ENCODE measurements at regions of chr1 and their contacts with region 1.

Region 1: GRCh38 chr1:234610348-234611152 is 572 bp upstream of the IRF2BP2 start:
- DNase-seq: peak; percentile 82
- ATAC-seq: peak; percentile 77
- H3K4me3 ChIP-seq: peak overlapping the region; percentile 54 to 64
- H3K27ac ChIP-seq: peak overlapping the region; percentile 89
- H3K4me1 ChIP-seq: peaks cover 47 to 71% of the 10 kb centered on the region in 2 experiments
- H3K27me3 ChIP-seq: no peaks in the 10 kb centered on the region
- CTCF ChIP-seq: 0 out of 6 replicates have a peak, but pooled peaks of 1 of the 3 experiments have one; percentile 11
- POLR2A ChIP-seq: no peak
- RAD21 ChIP-seq: no peak

Region 2: GRCh38 chr1:234499119-234499942 is 111.2 kb before region 1 on chr1:
- CTCF ChIA-PET with region 1: interaction called, 6 read pairs
- POLR2A ChIA-PET with region 1: interaction called, 6 read pairs
- RAD21 ChIA-PET with region 1: no interaction called
- intact Hi-C with region 1: loop called (anchors 1 kb)
- DNase-seq: peak; percentile 62
- ATAC-seq: peak; percentile 92
- H3K4me3 ChIP-seq: no peak overlapping the region
- H3K27ac ChIP-seq: no peak overlapping the region
- H3K4me1 ChIP-seq: peaks cover 13 to 43% of the 10 kb centered on the region in 2 experiments
- H3K27me3 ChIP-seq: no peaks in the 10 kb centered on the region
- CTCF ChIP-seq: peak; percentile 84 to 92 (median 87)
- POLR2A ChIP-seq: no peak
- RAD21 ChIP-seq: peak; percentile 100

Region 3: DNA sequence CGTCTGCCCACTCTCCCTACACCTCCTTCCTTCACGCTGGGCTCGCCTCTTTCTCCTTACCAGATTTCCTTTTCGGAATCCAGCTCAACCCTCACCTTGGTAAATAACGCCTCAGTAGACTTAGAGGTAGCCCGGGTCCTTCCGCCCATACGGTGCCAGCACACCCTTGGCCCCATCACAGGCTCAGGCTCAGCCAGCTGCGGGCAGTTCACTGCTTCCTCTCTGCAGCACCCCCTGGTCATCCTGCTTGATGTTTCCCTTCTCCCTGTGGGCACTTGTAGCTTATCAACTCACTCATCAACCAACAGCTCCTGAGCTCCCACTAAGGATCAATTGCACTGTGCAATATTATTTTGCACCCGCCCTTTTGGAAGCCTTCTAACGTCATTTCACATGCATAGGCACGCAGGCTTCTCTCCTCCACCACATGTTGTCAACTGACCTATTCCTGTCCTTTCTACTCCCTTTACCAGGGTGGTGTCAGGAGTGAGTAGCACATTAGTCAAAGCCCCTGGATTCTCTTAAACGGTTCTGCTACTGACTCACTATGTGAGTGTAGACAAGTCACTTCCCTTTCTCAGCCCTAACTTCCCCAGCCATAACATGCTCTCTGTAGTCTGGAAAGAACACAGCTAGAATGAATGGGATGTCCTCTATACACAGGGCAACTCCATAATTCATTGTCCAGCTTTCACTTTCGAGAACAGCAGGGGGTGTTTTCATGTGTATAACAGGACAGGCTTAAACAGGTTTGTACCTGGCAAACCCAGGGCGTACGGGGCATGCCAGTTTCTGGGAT is 46.5 kb after region 1 on chr1:
- CTCF ChIA-PET with region 1: no interaction called
- POLR2A ChIA-PET with region 1: interaction called, 12 read pairs
- RAD21 ChIA-PET with region 1: no interaction called
- intact Hi-C with region 1: no loop called
- DNase-seq: peak; percentile 86
- ATAC-seq: peak; percentile 68
- H3K4me3 ChIP-seq: peak overlapping the region in 1 of 2 experiments; percentile 7; a peak in 1 of 4 replicates
- H3K27ac ChIP-seq: no peak overlapping the region
- H3K4me1 ChIP-seq: peaks cover 27 to 64% of the 10 kb centered on the region in 2 experiments; a peak in 3 of 4 replicates
- H3K27me3 ChIP-seq: no peaks in the 10 kb centered on the region
- CTCF ChIP-seq: no peak
- POLR2A ChIP-seq: no peak
- RAD21 ChIP-seq: no peak; the same call in 1 of the 2 replicates

Region 4: GRCh38 chr1:234772345-234773147 is 162.0 kb after region 1 on chr1:
- CTCF ChIA-PET with region 1: no interaction called
- POLR2A ChIA-PET with region 1: no interaction called
- RAD21 ChIA-PET with region 1: no interaction called
- intact Hi-C with region 1: loop called (anchors 5 kb)
- DNase-seq: peak; percentile 97
- ATAC-seq: peak; percentile 96
- H3K4me3 ChIP-seq: peak overlapping the region in 1 of 2 experiments; percentile 16; a peak in 1 of 4 replicates
- H3K27ac ChIP-seq: peak overlapping the region; percentile 30; the same call in 1 of the 2 replicates
- H3K4me1 ChIP-seq: peaks cover 14 to 17% of the 10 kb centered on the region in 2 experiments
- H3K27me3 ChIP-seq: peaks cover 44% of the 10 kb centered on the region; the same call in 1 of the 2 replicates
- CTCF ChIP-seq: no peak
- POLR2A ChIP-seq: no peak
- RAD21 ChIP-seq: peak; percentile 57

Region 5: DNA sequence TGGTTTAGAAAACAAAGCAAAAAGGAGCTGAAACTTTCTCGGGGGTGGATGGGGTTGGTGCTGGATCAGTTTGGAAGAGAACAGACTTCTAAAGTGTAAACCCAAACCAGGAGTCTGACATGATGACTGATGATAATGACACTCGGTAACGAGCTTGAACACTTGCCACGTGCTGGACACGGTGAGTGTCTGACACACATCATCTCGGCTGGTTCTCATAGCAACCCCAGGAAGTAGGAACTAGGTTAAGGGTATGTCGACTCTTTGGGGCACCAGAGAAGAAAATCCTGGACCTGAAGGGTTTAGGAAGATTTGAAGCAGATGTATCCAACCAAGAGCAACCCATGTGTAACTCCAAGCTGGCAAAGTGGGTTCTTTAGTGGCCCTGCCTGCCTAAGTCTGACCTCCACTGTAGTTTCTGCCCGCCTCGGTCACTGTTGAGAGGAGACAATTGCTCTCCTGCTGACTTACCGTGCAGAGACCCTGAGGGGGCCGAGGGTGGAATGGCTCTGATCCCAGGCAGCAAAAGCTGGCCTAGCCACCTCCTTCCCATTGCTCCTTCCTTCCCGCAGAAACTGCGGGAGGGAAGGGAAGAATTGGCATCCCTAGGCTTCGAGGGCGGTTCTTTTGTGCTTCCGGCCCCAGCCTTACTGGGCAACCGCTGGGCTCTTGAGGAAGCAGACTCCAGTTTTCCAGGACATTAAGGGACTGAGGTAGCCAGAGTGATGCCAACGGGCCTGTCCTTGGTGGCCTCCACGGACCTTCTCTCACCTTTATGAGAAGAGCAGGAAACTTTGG is 362.1 kb after region 1 on chr1:
- CTCF ChIA-PET with region 1: no interaction called
- POLR2A ChIA-PET with region 1: no interaction called
- RAD21 ChIA-PET with region 1: no interaction called
- intact Hi-C with region 1: no loop called
- DNase-seq: no peak
- ATAC-seq: no peak
- H3K4me3 ChIP-seq: no peak overlapping the region
- H3K27ac ChIP-seq: no peak overlapping the region
- H3K4me1 ChIP-seq: peaks cover 28 to 34% of the 10 kb centered on the region in 2 experiments
- H3K27me3 ChIP-seq: no peaks in the 10 kb centered on the region; the same call in 1 of the 2 replicates
- CTCF ChIP-seq: no peak
- POLR2A ChIP-seq: no peak
- RAD21 ChIP-seq: no peak

Region 6: DNA sequence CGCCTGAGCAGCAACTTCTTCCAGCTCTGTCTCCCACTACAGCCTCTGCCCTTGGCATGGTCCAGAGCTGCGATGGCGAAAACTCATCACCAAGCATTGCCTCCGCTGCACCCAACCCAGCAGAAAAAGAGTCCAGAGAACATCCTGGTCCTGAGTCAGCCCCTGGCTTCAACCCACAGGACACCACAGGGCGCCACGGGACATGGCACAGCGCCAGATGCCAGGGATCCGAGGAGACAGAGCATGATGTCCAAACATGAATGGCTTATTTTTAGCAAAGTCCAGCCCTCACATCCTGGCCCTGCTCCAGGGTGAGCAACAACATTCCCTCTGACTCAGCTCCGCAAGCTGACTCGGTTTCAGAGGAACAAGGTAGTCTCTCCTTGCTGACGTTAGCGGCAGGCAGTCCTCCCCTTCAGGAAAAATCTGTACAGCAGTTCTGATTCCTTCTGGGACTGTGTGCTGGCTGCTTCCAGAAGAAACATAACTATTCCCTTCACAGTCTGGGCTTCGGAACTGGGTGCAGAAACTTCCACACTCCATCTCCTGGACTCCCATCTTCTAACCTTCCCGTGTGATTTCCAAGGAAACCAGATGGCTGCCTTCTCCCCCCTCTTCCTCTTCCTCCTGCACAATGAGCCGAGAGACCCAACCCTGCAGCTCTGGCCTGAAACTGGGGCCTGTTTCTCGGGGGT is 386.8 kb after region 1 on chr1:
- CTCF ChIA-PET with region 1: no interaction called
- POLR2A ChIA-PET with region 1: interaction called, 8 read pairs
- RAD21 ChIA-PET with region 1: no interaction called
- intact Hi-C with region 1: loop called (anchors 1 kb)
- DNase-seq: peak; percentile 97
- ATAC-seq: peak; percentile 75
- H3K4me3 ChIP-seq: peak overlapping the region; percentile 29 to 45
- H3K27ac ChIP-seq: peak overlapping the region; percentile 52
- H3K4me1 ChIP-seq: peaks cover 30 to 38% of the 10 kb centered on the region in 2 experiments
- H3K27me3 ChIP-seq: no peaks in the 10 kb centered on the region; the same call in 1 of the 2 replicates
- CTCF ChIP-seq: no peak
- POLR2A ChIP-seq: no peak
- RAD21 ChIP-seq: peak; percentile 63